ENCODE measurements at regions of chr20 and their contacts with region 1.

Region 1: DNA sequence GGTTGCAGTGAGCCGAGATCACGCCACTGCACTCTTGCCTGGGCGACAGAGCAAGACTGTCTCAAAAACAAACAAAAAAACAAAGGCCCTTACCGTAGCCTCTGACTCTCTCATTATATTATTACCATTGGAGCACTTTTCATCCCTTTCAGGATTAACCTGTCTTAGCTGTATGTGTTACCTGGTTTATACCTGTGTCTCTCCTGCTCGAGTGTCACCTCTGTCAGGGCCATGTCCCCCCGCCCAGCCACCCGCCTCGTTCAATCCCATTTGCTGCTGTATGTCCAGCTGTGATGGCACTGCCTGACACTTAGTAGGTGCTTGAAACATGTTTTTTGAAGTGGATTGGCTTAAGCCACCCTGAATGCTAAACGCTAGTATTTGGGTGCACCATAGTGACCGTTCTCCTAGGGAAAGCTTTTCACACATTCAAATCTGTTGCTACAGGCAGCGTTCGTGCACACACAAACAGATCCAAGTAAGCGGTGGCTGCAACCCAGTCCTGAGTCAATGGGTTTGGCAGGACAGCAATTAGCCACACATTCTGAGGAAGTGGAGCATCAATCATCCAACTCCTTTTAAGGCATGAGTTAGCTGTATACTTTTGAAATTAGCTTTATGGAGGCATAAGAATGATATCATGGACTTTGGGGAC is 98.9 kb upstream of the ZNF217 start:
- DNase-seq: no peak
- H3K4me3 ChIP-seq: no peak overlapping the region
- H3K27ac ChIP-seq: no peak overlapping the region
- H3K4me1 ChIP-seq: no peaks in the 10 kb centered on the region
- CTCF ChIP-seq: no peak

Region 2: DNA sequence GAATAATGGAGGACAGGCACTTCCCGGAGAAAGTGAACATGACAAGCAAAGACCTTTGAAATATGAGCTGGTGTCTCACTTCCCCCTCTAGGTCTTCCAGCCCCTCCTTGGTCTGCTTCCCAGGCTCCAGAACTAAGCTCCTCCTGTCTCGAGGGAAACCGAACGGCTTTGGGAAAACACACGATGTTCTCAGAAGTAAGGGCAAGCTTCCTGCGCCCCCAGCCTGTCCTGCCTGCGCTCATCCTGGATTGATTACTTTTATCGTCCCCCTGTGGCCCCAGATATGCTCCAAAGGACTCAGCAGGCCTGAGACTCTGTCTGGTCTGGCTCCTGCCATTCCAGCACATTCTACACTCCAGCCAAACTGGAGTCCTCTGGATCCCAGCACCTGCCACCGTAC is 182.3 kb before region 1 on chr20:
- CTCF ChIA-PET with region 1: no interaction called
- POLR2A ChIA-PET with region 1: no interaction called
- intact Hi-C with region 1: no loop called
- DNase-seq: no peak
- H3K4me3 ChIP-seq: no peak overlapping the region
- H3K27ac ChIP-seq: no peak overlapping the region
- H3K4me1 ChIP-seq: no peaks in the 10 kb centered on the region
- CTCF ChIP-seq: no peak

Region 3: DNA sequence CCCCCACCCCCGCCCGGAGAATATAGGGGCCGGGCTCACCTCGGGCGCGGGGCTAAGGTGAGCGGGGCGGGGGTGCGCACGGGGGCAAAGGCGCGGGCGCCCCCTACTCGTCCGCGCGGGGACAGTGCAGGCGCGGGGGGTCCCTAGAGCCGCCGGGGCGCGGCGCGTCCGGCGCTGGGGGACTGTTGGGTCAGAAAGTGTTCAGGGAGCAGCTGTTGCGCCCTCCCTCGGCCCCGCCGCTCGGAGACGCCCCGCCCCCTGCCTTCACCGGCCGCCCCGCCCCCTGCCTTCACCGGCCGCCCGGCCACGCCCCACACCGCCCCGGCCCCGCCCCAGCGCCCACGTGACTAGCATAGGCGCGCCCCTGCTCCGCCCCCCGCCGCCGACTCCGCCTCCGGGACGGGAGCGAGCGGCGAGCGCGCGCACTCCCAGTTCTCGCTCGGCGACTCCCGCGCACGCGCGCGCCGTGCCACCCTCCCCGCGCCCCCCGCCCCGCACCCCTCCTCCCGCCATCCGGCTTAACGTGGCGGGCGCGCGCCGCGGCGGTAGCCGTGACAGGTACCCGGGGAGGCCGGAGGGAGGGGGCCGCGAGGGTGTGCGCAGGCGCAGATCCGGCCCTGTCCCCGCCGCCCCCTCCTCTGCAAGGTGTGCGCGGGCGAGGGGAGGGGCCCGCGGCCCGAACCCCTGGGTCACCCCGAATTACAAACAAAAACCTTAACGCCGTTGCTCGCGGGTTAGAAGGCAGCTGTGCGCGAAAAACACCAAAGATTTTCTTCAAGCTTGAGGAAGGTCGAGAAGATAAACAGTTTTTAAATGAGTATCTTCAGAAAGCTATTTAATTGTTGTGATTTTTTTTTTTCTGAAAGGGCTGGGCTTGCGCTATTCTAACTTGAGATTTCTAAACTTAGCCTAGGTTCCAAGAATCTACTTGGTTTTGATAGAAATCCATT is 98.2 kb before region 1 on chr20:
- CTCF ChIA-PET with region 1: no interaction called
- POLR2A ChIA-PET with region 1: no interaction called
- intact Hi-C with region 1: no loop called
- DNase-seq: peak; percentile 96
- H3K4me3 ChIP-seq: peak overlapping the region; percentile 100
- H3K27ac ChIP-seq: peak overlapping the region; percentile 95
- H3K4me1 ChIP-seq: peaks cover 30% of the 10 kb centered on the region
- CTCF ChIP-seq: peak; percentile 59

Region 4: DNA sequence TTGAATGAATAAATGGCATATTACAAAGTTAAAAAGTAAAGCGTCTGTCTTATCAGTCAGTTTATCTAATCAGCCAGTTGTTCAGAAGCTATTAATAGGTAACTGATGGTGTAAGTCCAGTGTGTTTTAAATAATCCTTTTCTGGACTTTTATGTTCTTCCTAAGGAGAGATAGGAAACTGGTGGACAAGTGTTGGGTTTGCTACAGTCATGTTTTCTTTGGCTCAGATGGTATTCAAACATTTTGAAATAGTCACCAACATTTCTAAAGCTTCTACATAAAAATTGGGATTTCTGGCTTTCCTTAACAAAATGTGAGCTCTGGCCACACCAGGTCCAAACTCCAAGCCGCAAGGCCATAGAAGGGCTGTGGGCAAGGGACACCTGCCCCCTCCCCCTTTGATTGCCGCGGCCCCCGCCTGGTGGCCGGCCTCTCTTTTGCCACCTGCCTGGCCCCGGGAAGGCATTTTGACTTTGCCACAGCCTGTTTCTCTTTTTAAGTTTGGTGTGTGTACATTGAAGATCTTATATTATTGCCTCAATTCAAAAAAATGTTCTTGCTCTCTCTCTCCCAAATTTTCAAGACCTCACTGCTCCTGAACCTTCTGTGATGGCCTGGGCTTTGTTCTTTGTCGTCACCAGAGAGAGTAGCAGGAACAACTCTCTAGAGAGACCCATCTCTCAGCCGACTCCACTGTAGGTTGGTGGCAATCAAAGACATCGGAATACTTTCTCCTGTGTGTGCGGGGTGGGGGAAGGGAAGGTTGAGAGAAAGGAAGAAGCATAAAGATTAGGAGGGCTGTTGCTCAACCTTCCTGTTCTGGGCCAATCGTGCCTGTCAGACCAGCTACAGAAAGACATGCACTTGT is 14.9 kb before region 1 on chr20:
- CTCF ChIA-PET with region 1: no interaction called
- POLR2A ChIA-PET with region 1: interaction called, 12 read pairs
- intact Hi-C with region 1: no loop called
- DNase-seq: no peak
- H3K4me3 ChIP-seq: no peak overlapping the region
- H3K27ac ChIP-seq: no peak overlapping the region
- H3K4me1 ChIP-seq: peaks cover 34% of the 10 kb centered on the region
- CTCF ChIP-seq: no peak

Region 5: GRCh38 chr20:53786445-53787267 is 94.1 kb after region 1 on chr20:
- CTCF ChIA-PET with region 1: no interaction called
- POLR2A ChIA-PET with region 1: no interaction called
- intact Hi-C with region 1: no loop called
- DNase-seq: peak; percentile 22
- H3K4me3 ChIP-seq: no peak overlapping the region
- H3K27ac ChIP-seq: no peak overlapping the region
- H3K4me1 ChIP-seq: peaks cover 12% of the 10 kb centered on the region
- CTCF ChIP-seq: no peak

Region 6: DNA sequence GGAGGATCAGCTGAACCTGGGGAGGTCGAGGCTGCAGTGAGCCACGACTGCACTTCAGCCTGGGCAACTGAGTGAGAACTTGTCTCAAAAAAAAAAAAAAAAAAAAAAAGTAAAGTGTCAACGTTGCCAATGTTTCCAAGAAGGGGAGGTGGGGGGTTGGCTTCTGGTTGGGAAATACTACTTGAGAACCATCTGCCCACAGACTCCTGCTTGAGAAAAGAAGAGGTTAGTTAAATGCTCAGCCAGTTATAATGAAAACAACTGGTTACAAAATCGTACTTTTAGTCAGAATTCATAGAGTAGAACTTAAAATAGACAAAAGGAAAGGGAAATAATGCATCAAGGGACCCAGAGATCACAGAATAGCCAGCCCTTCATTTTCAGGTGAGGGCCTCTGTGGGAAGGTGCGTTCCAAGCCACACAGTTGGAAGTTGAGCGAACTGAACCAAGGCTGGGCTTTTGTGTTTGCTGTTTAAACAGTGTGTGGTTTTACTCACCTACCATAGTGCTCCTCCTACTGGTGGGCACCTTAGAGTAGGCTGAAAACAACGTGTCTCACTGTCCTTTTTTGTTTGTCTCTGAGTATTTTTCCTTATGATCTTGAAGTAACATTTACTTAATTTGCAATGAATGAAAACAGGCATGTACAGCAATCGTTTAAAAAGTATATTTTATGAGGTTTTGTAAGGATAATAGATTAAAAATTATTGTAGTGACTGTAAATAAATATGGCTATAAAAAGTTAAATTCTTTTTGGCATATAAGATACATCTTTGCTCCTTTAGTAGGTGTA is 177.1 kb after region 1 on chr20:
- CTCF ChIA-PET with region 1: no interaction called
- POLR2A ChIA-PET with region 1: no interaction called
- intact Hi-C with region 1: no loop called
- DNase-seq: peak; percentile 93
- H3K4me3 ChIP-seq: peak overlapping the region; percentile 18
- H3K27ac ChIP-seq: peak overlapping the region; percentile 92
- H3K4me1 ChIP-seq: peaks cover 89% of the 10 kb centered on the region
- CTCF ChIP-seq: peak; percentile 98